CD8-positive, alpha-beta memory T cell (primary cell): ENCODE measurements at regions of chr21 and their contacts with region 1.

Region 1: DNA sequence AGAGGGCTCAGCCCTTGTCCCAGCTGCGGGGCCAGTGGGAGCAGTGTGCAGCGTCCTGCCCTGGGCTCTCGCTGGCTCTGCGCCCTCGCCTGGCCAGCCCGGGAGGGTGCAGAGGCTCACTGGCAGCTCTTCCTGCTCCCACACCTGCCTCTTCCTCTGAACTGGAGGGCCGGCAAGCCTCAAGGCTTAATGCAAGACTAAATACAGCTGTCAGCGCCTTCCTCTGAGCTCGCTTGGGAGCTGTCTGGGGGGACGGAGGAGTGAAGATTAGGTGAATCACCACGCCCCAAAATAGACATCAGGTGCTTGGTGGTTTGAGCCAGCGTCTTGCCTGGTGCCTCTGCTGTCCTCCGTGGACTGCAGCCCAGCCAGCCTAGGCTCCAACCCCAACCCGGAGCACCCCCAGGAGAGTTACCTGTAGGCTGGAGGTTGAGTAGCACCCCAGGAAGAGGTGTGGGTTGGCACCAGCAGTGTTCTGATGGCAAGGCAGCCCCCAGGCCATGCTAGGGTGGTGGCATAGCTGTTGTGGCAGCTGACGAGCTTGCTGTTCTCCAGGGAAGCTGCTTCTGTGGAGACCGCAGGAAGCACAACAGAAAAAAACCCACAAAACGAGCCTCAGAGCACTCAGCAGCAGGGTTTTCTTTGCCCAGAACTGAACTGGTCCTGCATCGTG is 36.9 kb downstream of the UMODL1 start:
- DNase-seq: peak; percentile 23 to 72 (median 56)
- H3K4me3 ChIP-seq: peak overlapping the region; percentile 23
- H3K4me3 Mint-ChIP-seq: peak overlapping the region in 2 of 7 donors; percentile 26 to 28
- H3K27ac ChIP-seq: no peak overlapping the region
- H3K27ac Mint-ChIP-seq: no peak overlapping the region
- H3K4me1 ChIP-seq: peaks cover 16% of the 10 kb centered on the region
- H3K4me1 Mint-ChIP-seq: peaks cover 4 to 6% (median 5%) of the 10 kb centered on the region in 3 donors
- H3K27me3 ChIP-seq: peaks cover 6% of the 10 kb centered on the region
- H3K27me3 Mint-ChIP-seq: peaks cover 3 to 12% of the 10 kb centered on the region in 2 donors

Region 2: GRCh38 chr21:41816220-41817165 is 291.5 kb before region 1 on chr21:
- CTCF ChIA-PET with region 1: interaction called, 32 read pairs
- POLR2A ChIA-PET with region 1: no interaction called
- DNase-seq: peak; percentile 18 to 64 (median 36)
- H3K4me3 ChIP-seq: no peak overlapping the region
- H3K4me3 Mint-ChIP-seq: no peak overlapping the region
- H3K27ac ChIP-seq: no peak overlapping the region
- H3K27ac Mint-ChIP-seq: peak overlapping the region in 2 of 8 donors; percentile 61 to 64
- H3K4me1 ChIP-seq: no peaks in the 10 kb centered on the region
- H3K4me1 Mint-ChIP-seq: peaks cover 0 to 7% (median 3%) of the 10 kb centered on the region in 3 donors
- H3K27me3 ChIP-seq: no peaks in the 10 kb centered on the region
- H3K27me3 Mint-ChIP-seq: no peaks in the 10 kb centered on the region

Region 3: GRCh38 chr21:41926117-41926806 is 181.8 kb before region 1 on chr21:
- CTCF ChIA-PET with region 1: interaction called, 15 read pairs
- POLR2A ChIA-PET with region 1: no interaction called
- DNase-seq: peak in 2 of 5 donors; percentile 48 to 65
- H3K4me3 ChIP-seq: peak overlapping the region; percentile 66
- H3K4me3 Mint-ChIP-seq: peak overlapping the region; percentile 87 to 97 (median 95)
- H3K27ac ChIP-seq: peak overlapping the region; percentile 71
- H3K27ac Mint-ChIP-seq: peak overlapping the region; percentile 79 to 100 (median 98)
- H3K4me1 ChIP-seq: peaks cover 44% of the 10 kb centered on the region
- H3K4me1 Mint-ChIP-seq: peaks cover 35 to 56% (median 43%) of the 10 kb centered on the region in 3 donors
- H3K27me3 ChIP-seq: no peaks in the 10 kb centered on the region
- H3K27me3 Mint-ChIP-seq: peaks cover 1 to 5% of the 10 kb centered on the region in 2 donors

Region 4: DNA sequence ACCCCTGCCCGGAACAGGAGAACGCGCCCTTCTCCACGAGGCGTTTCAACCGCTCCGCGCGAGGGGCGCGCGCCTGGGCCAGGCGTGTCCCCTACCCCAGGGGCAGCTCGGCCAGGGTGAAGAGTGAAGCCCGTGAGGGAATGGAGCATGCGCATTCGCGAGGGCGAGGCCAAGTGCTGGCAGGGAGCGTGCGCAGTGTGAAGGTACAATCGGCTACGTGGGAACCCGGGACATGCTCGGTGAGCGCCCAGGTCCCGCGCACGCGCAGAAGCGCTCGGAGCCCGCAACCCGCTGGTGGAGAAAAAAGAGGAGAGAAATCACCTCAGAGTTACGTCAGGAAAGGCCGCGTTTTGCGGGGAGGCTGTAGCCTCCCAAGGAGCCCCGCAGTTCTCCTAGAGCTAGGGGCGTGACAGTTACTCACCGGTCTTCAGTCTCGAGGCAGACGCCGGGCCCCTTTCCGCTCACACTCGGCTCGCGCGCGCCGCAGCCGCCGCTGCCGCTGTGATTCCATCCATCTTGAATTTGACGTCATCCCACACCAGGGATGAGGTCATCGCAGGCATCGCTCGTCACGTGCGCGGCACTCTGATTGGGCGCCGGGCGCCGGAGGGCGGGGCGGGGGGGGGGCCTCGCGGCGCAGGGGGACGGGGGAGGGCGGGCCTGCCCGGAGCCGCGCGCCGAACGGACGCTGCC is 98.0 kb before region 1 on chr21 and contains the start of gene ZBTB21:
- CTCF ChIA-PET with region 1: interaction called, 52 read pairs
- POLR2A ChIA-PET with region 1: interaction called, 8 read pairs
- DNase-seq: peak; percentile 97 to 99 (median 98)
- H3K4me3 ChIP-seq: peak within 1 kb of the TSS; percentile 65
- H3K4me3 Mint-ChIP-seq: peak within 1 kb of the TSS; percentile 93 to 99 (median 97)
- H3K27ac ChIP-seq: peak within 1 kb of the TSS; percentile 98
- H3K27ac Mint-ChIP-seq: peak within 1 kb of the TSS; percentile 98 to 100 (median 100)
- H3K4me1 ChIP-seq: peaks cover 10% of the 10 kb centered on the region
- H3K4me1 Mint-ChIP-seq: peaks cover 10 to 37% (median 23%) of the 10 kb centered on the region in 3 donors
- H3K27me3 ChIP-seq: no peaks in the 10 kb centered on the region
- H3K27me3 Mint-ChIP-seq: peaks cover 0 to 6% of the 10 kb centered on the region in 2 donors
- total RNA-seq, gene ZBTB21: 39.0 to 43.6 TPM

Region 5: GRCh38 chr21:42062236-42063022 is 45.6 kb before region 1 on chr21:
- CTCF ChIA-PET with region 1: interaction called, 13 read pairs
- POLR2A ChIA-PET with region 1: interaction called, 13 read pairs
- DNase-seq: peak; percentile 81 to 98 (median 94)
- H3K4me3 ChIP-seq: peak overlapping the region; percentile 84
- H3K4me3 Mint-ChIP-seq: peak overlapping the region; percentile 61 to 94 (median 88)
- H3K27ac ChIP-seq: peak overlapping the region; percentile 63
- H3K27ac Mint-ChIP-seq: peak overlapping the region; percentile 92 to 100 (median 99)
- H3K4me1 ChIP-seq: peaks cover 43% of the 10 kb centered on the region
- H3K4me1 Mint-ChIP-seq: peaks cover 38 to 64% (median 53%) of the 10 kb centered on the region in 3 donors
- H3K27me3 ChIP-seq: no peaks in the 10 kb centered on the region
- H3K27me3 Mint-ChIP-seq: peaks cover 0 to 1% of the 10 kb centered on the region in 2 donors

Region 6: DNA sequence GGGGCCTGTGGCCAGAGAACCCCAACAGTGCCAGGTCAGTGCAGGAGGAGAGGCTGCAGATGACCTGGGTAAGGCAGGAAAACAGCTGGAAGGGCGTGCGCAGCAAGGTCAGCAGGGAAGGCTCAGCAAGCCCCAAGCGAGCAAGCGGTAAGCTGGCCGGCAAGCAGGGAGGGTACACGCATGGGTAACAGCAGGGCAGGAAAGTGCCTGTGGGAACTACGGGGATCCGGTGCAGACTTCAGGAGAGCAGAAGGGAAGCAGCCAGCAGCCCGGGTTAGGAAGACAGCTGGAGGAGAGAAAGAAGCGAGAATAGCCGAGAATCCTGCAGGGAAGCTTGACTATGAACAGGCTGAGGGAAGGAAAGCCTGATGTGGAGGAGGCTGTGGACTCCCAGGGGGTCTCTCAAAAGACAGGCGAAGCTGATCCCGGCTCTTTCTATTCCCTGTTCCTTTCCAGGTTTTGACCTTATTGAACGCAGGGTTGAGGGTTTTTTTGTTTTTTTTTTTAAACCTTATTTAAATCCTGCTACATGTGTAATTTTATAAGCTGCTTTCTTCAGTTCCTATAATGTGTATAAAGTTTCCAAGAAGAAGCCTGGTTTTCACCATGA is 16.0 kb before region 1 on chr21:
- CTCF ChIA-PET with region 1: interaction called, 19 read pairs
- POLR2A ChIA-PET with region 1: no interaction called
- DNase-seq: no peak
- H3K4me3 ChIP-seq: no peak overlapping the region
- H3K4me3 Mint-ChIP-seq: no peak overlapping the region
- H3K27ac ChIP-seq: no peak overlapping the region
- H3K27ac Mint-ChIP-seq: no peak overlapping the region
- H3K4me1 ChIP-seq: peaks cover 20% of the 10 kb centered on the region
- H3K4me1 Mint-ChIP-seq: peaks cover 7 to 22% (median 16%) of the 10 kb centered on the region in 3 donors
- H3K27me3 ChIP-seq: no peaks in the 10 kb centered on the region
- H3K27me3 Mint-ChIP-seq: peaks cover 11 to 14% of the 10 kb centered on the region in 2 donors

Region 7: DNA sequence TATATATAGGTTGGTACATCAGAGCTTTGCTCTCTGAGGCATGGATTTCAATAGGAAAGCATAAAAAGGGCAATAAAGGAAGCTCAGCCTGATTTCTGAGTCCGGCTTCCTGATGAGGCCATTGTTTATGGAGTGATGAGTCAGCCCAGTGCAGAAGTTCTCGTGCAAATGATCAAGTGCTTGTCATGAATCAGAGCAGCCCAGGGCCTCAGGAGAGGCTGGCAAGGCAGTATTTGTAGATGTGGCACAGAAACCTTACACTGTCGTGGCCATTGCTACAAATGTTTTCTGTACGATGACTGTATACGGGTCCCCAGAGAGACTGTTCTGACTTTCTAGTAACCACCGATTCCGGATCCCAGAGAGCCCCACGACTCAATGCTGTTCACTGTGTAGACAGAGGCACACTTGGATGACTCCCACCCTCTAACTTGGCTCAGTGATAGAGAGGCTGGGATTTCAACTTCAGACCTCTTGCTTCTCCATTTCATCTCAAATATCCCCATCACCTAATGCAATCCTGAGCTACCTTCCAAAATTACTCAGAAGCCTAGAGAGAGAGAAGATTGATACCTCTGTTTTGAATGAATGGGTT is 10.1 kb before region 1 on chr21:
- CTCF ChIA-PET with region 1: interaction called, 19 read pairs
- POLR2A ChIA-PET with region 1: no interaction called
- DNase-seq: no peak
- H3K4me3 ChIP-seq: no peak overlapping the region
- H3K4me3 Mint-ChIP-seq: no peak overlapping the region
- H3K27ac ChIP-seq: no peak overlapping the region
- H3K27ac Mint-ChIP-seq: no peak overlapping the region
- H3K4me1 ChIP-seq: no peaks in the 10 kb centered on the region
- H3K4me1 Mint-ChIP-seq: peaks cover 0 to 6% (median 0%) of the 10 kb centered on the region in 3 donors
- H3K27me3 ChIP-seq: no peaks in the 10 kb centered on the region
- H3K27me3 Mint-ChIP-seq: peaks cover 10 to 14% of the 10 kb centered on the region in 2 donors

Region 8: GRCh38 chr21:42156690-42157577 is 48.9 kb after region 1 on chr21:
- CTCF ChIA-PET with region 1: no interaction called
- POLR2A ChIA-PET with region 1: no interaction called
- DNase-seq: no peak
- H3K4me3 ChIP-seq: no peak overlapping the region
- H3K4me3 Mint-ChIP-seq: no peak overlapping the region
- H3K27ac ChIP-seq: no peak overlapping the region
- H3K27ac Mint-ChIP-seq: peak overlapping the region in 1 of 8 donors; percentile 28
- H3K4me1 ChIP-seq: peaks cover 25% of the 10 kb centered on the region
- H3K4me1 Mint-ChIP-seq: peaks cover 6 to 8% (median 8%) of the 10 kb centered on the region in 3 donors
- H3K27me3 ChIP-seq: no peaks in the 10 kb centered on the region
- H3K27me3 Mint-ChIP-seq: peaks cover 7 to 13% of the 10 kb centered on the region in 2 donors